GM12878 (cell line): ENCODE measurements at regions of chr11 and their contacts with region 1.

Region 1: GRCh38 chr11:111777094-111778046 is 11.2 kb upstream of the PPP2R1B start:
- DNase-seq: peak; percentile 52
- ATAC-seq: peak; percentile 92
- H3K4me3 ChIP-seq: no peak overlapping the region
- H3K27ac ChIP-seq: peak overlapping the region; percentile 68
- H3K4me1 ChIP-seq: peaks cover 8% of the 10 kb centered on the region; the same call in 1 of the 2 replicates
- H3K27me3 ChIP-seq: no peaks in the 10 kb centered on the region
- CTCF ChIP-seq: peak; percentile 65 to 86 (median 79)
- EP300 ChIP-seq: no peak
- POLR2A ChIP-seq: no peak
- RAD21 ChIP-seq: peak; percentile 88

Region 2: DNA sequence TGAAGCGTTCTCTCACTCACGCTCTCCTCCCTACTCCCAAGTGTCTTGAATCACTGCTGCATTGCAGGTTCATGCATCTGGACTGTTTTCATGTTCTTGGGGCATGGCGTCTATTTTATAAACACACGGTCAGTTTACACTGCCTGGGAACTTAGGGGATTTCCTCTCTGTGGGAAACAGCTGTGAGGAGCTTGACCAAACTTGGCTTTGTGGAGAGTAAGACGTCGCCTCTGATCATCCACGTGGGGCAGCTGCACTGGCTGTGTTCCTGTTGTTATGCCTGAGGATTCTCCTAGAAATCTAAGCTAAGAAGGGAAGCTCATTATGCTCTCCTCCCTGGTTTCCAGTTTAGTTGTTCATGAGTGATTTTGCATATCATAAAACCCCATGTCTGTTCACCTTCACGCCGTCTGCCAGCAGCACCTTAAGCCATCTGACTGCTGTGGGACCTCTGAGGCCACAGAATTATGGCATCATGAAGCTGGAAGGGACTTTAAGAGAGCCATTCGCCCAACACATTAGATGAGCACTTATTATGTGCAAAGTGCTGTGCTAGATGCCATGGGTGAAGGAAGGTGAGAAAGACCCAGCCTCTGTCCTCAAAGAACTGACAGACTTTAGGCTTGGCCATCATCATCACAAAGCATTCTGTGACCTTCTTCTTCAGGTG is 359.5 kb before region 1 on chr11:
- CTCF ChIA-PET with region 1: no interaction called
- POLR2A ChIA-PET with region 1: no interaction called
- RAD21 ChIA-PET with region 1: no interaction called
- SMC1A ChIA-PET with region 1: no interaction called
- in situ Hi-C with region 1: no loop called
- intact Hi-C with region 1: no loop called
- DNase-seq: peak; percentile 96
- ATAC-seq: peak; percentile 58
- H3K4me3 ChIP-seq: peak overlapping the region; percentile 29; the same call in 1 of the 2 replicates
- H3K27ac ChIP-seq: peak overlapping the region; percentile 98
- H3K4me1 ChIP-seq: peaks cover 81% of the 10 kb centered on the region
- H3K27me3 ChIP-seq: no peaks in the 10 kb centered on the region
- CTCF ChIP-seq: no peak
- EP300 ChIP-seq: peak; percentile 94
- POLR2A ChIP-seq: no peak; the same call in 1 of the 2 replicates
- RAD21 ChIP-seq: 0 out of 2 replicates have a peak, but pooled peaks have one; percentile 16

Region 3: GRCh38 chr11:111565114-111565720 is 212.2 kb before region 1 on chr11:
- CTCF ChIA-PET with region 1: interaction called, 26 read pairs
- POLR2A ChIA-PET with region 1: no interaction called
- RAD21 ChIA-PET with region 1: interaction called, 8 read pairs
- SMC1A ChIA-PET with region 1: interaction called, 6 read pairs
- in situ Hi-C with region 1: no loop called
- intact Hi-C with region 1: loop called (anchors 1 kb)
- DNase-seq: peak; percentile 32
- ATAC-seq: peak; percentile 75
- H3K4me3 ChIP-seq: no peak overlapping the region
- H3K27ac ChIP-seq: no peak overlapping the region
- H3K4me1 ChIP-seq: no peaks in the 10 kb centered on the region
- H3K27me3 ChIP-seq: no peaks in the 10 kb centered on the region
- CTCF ChIP-seq: peak; percentile 73 to 86 (median 83)
- EP300 ChIP-seq: no peak
- POLR2A ChIP-seq: no peak
- RAD21 ChIP-seq: peak; percentile 89

Region 4: DNA sequence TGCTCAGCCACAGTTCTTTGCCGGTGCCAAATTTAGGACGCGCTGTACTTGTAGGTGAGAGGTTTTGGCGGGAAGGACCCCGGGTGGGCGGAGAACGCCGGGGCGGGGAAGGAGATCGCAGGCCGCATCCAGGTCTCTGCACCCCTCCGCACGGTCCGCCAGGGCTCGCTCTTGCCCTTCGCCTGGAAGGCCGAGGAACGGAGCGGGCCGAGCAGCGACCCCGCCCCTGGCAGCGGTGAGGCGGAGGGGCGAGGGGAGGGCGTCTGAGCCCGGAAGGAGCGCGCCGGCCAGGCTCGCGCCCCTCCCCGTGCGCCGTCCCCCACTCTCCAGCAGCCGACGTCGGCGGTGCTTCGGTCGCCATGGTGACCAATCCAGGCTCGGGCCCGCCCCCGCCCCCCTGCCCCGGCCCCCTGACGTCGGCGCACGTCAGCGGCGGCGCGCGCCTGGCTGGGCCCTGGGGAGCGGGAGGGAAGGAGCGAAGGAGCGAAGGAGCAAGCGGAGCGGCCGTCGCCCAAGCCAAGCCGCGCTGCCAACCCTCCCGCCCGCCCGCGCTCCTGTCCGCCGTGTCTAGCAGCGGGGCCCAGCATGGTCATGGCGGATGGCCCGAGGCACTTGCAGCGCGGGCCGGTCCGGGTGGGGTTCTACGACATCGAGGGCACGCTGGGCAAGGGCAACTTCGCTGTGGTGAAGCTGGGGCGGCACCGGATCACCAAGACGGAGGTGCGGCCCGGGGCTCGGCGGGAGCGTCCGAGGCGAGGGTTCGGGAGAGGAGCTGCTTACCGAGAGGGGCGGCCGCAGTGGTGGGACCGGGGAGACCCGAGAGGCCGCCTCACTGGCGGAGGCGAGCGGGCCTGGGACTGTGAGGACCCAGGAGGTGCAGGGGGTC is 175.1 kb before region 1 on chr11 and contains the start of gene SIK2:
- CTCF ChIA-PET with region 1: interaction called, 156 read pairs
- POLR2A ChIA-PET with region 1: interaction called, 8 read pairs
- RAD21 ChIA-PET with region 1: interaction called, 73 read pairs
- SMC1A ChIA-PET with region 1: interaction called, 74 read pairs
- in situ Hi-C with region 1: loop called (anchors 5 kb)
- intact Hi-C with region 1: loop called (anchors 1 kb)
- DNase-seq: peak; percentile 88
- ATAC-seq: peak; percentile 87
- H3K4me3 ChIP-seq: peak within 1 kb of the TSS; percentile 93
- H3K27ac ChIP-seq: peak within 1 kb of the TSS; percentile 74
- H3K4me1 ChIP-seq: peaks cover 13% of the 10 kb centered on the region
- H3K27me3 ChIP-seq: no peaks in the 10 kb centered on the region
- CTCF ChIP-seq: peak; percentile 91 to 99 (median 99); a peak in 5 of 6 replicates
- EP300 ChIP-seq: 0 out of 4 replicates have a peak, but pooled peaks of 1 of the 2 experiments have one; percentile 9
- POLR2A ChIP-seq: peak; percentile 67; the same call in 1 of the 2 replicates
- RAD21 ChIP-seq: peak; percentile 97
- polyA plus RNA-seq, gene SIK2: 0.97 to 1.1 TPM

Region 5: DNA sequence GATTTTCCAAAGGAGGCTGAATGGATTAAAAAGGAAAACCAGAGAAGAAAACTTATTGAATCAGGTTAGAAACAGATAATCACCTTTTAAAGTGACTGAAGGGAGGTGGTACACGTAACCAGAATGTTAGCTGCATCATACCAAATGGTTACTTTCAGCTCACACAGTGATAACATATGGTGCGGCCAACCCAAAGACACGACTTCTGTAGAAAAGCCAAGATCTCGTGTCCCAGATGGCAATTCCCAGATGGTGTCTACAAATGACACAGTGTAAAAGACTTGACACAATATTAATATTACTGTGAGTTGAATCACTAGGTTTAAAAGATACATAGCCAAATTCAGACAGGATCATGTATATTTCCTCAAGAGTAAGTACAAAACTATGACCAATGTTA is 16.3 kb before region 1 on chr11:
- CTCF ChIA-PET with region 1: interaction called, 170 read pairs
- POLR2A ChIA-PET with region 1: interaction called, 56 read pairs
- RAD21 ChIA-PET with region 1: interaction called, 136 read pairs
- SMC1A ChIA-PET with region 1: interaction called, 154 read pairs
- in situ Hi-C with region 1: no loop called
- intact Hi-C with region 1: no loop called
- DNase-seq: no peak
- ATAC-seq: no peak
- H3K4me3 ChIP-seq: no peak overlapping the region
- H3K27ac ChIP-seq: no peak overlapping the region
- H3K4me1 ChIP-seq: no peaks in the 10 kb centered on the region
- H3K27me3 ChIP-seq: no peaks in the 10 kb centered on the region
- CTCF ChIP-seq: no peak
- EP300 ChIP-seq: no peak
- POLR2A ChIP-seq: no peak
- RAD21 ChIP-seq: no peak

Region 6: GRCh38 chr11:111797145-111797581 is 19.8 kb after region 1 on chr11:
- CTCF ChIA-PET with region 1: interaction called, 31 read pairs
- POLR2A ChIA-PET with region 1: interaction called, 5 read pairs
- RAD21 ChIA-PET with region 1: interaction called, 4 read pairs
- SMC1A ChIA-PET with region 1: interaction called, 19 read pairs
- in situ Hi-C with region 1: no loop called
- intact Hi-C with region 1: no loop called
- DNase-seq: peak; percentile 34
- ATAC-seq: peak; percentile 78
- H3K4me3 ChIP-seq: no peak overlapping the region
- H3K27ac ChIP-seq: no peak overlapping the region
- H3K4me1 ChIP-seq: no peaks in the 10 kb centered on the region
- H3K27me3 ChIP-seq: no peaks in the 10 kb centered on the region
- CTCF ChIP-seq: no peak
- EP300 ChIP-seq: no peak
- POLR2A ChIP-seq: no peak
- RAD21 ChIP-seq: no peak

Region 7: DNA sequence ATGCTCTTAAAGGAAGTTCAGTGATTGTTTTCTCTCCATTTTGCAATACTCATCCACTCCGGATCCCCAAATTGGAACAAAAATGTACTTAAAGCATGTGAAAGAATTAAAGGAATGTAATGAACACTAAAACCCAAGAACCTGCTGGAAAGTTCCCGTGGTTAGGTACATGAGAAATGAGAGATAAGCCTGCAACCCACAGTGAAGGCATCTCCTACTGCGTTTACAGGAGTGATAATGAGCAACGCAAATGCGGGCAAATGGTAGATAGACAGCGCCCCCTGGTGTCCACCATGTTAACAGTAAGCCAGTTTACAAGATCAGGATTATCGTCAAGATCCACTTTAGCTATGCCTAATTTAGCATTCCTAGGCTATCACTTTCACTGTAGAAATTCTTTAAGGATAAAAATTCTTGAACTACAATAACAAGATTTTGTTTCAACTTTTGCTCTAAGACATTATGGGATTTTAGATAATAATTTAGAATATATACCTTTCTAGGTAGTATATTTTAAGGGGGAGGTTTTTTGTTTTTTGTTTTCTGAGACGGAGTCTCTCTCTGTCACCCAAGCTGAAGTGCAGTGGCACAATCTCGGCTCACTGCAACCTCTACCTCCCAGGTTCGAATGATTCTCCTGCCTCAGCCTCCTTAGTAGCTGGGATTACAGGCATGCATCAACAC is 64.1 kb after region 1 on chr11:
- CTCF ChIA-PET with region 1: interaction called, 63 read pairs
- POLR2A ChIA-PET with region 1: interaction called, 3 read pairs
- RAD21 ChIA-PET with region 1: interaction called, 38 read pairs
- SMC1A ChIA-PET with region 1: interaction called, 72 read pairs
- in situ Hi-C with region 1: no loop called
- intact Hi-C with region 1: loop called (anchors 1 kb)
- DNase-seq: peak; percentile 48
- ATAC-seq: peak; percentile 88
- H3K4me3 ChIP-seq: no peak overlapping the region
- H3K27ac ChIP-seq: no peak overlapping the region
- H3K4me1 ChIP-seq: peaks cover 6% of the 10 kb centered on the region; the same call in 1 of the 2 replicates
- H3K27me3 ChIP-seq: no peaks in the 10 kb centered on the region
- CTCF ChIP-seq: peak; percentile 79 to 91 (median 82)
- EP300 ChIP-seq: no peak
- POLR2A ChIP-seq: no peak
- RAD21 ChIP-seq: peak; percentile 93